ENCODE measurements at regions of chr1 and their contacts with region 1.

Region 1: DNA sequence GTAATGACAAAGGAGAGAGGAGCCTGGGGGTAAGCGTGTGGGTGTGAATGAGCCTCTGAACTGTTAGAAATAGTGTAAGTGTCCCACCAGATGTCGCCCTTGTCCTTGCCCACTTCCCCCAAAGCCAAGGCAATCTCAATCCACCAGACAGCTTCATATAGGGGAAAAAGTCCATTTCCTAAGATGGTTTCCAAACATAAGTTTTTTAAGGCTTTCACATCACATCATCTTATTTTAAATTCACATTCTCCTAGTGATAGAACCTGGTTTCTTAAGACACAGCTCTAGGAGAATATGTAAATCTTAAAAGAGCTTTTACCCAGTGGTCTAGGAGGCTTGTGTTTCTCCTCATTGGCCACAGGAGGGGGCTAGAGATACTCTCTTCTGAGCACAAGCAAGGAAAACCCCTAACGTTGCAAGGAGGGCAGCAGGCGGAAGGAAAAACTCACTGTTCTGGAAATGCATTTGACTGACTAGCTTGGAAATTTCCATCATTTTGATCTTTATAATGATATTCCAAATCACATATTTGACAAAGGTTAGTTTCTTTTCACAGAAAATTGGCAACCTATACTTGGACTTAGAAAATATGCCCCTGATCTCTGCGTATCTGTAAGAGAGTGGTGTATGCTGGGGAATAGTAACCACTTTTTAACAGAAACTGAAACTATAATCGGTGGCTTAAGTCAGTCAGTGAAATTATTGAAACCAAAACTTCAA is 51.9 kb upstream of the LPAR3 start:
- DNase-seq: peak; percentile 81
- H3K4me3 Mint-ChIP-seq: peak overlapping the region; percentile 74
- H3K27ac Mint-ChIP-seq: peak overlapping the region; percentile 92
- H3K4me1 Mint-ChIP-seq: peaks cover 14% of the 10 kb centered on the region
- H3K27me3 Mint-ChIP-seq: no peaks in the 10 kb centered on the region

Region 2: DNA sequence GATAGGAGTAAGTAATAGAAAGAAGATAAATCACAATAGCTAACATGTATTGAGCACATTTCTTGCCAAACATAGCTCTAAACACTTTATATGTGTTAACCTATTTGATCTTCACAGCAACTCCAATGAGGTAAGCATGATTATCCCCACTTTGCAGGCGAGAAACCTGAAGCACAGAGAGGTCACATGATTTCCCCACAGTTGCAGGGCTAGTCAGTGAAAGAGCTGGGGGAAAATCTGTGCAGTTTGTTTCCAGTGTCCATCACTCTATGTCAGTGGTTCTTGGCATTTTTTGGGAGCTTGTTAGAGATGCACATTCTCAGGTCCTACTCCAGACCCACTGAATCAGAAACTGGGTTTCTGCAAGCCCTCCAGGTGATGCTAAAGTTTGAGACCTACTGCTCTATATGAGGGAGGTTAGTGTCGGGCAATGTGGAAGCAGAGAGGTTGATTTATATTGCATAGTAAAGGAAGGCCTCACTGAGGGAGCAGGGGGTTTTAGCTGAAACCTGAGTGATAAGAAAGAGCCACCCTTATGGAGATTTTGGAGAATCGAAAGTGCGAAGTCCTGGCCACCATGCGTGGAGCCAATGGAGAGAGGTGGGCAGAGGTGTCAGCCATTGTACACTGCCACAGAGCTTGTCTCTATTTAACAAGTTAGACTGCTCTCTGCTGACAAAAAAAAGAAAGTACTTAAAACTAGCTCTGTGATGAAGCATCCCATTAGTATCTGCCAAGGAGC is 82.5 kb after region 1 on chr1:
- CTCF ChIA-PET with region 1: interaction called, 108 read pairs
- intact Hi-C with region 1: loop called (anchors 1 kb)
- DNase-seq: peak; percentile 25
- H3K4me3 Mint-ChIP-seq: no peak overlapping the region
- H3K27ac Mint-ChIP-seq: peak overlapping the region; percentile 34
- H3K4me1 Mint-ChIP-seq: peaks cover 7% of the 10 kb centered on the region
- H3K27me3 Mint-ChIP-seq: no peaks in the 10 kb centered on the region

Region 3: GRCh38 chr1:85078903-85079302 is 134.0 kb after region 1 on chr1:
- CTCF ChIA-PET with region 1: interaction called, 3 read pairs
- intact Hi-C with region 1: loop called (anchors 1 kb)
- DNase-seq: no peak
- H3K4me3 Mint-ChIP-seq: no peak overlapping the region
- H3K27ac Mint-ChIP-seq: no peak overlapping the region
- H3K4me1 Mint-ChIP-seq: no peaks in the 10 kb centered on the region
- H3K27me3 Mint-ChIP-seq: peaks cover 9% of the 10 kb centered on the region

Region 4: GRCh38 chr1:85230305-85230980 is 285.5 kb after region 1 on chr1:
- CTCF ChIA-PET with region 1: interaction called, 17 read pairs
- intact Hi-C with region 1: no loop called
- DNase-seq: peak; percentile 7
- H3K4me3 Mint-ChIP-seq: no peak overlapping the region
- H3K27ac Mint-ChIP-seq: no peak overlapping the region
- H3K4me1 Mint-ChIP-seq: no peaks in the 10 kb centered on the region
- H3K27me3 Mint-ChIP-seq: peaks cover 2% of the 10 kb centered on the region

Region 5: GRCh38 chr1:85307987-85308832 is 363.3 kb after region 1 on chr1:
- CTCF ChIA-PET with region 1: no interaction called
- intact Hi-C with region 1: loop called (anchors 1 kb)
- DNase-seq: peak; percentile 80
- H3K4me3 Mint-ChIP-seq: no peak overlapping the region
- H3K27ac Mint-ChIP-seq: no peak overlapping the region
- H3K4me1 Mint-ChIP-seq: peaks cover 4% of the 10 kb centered on the region
- H3K27me3 Mint-ChIP-seq: peaks cover 26% of the 10 kb centered on the region